Body of pancreas (tissue), 4 donors: ENCODE measurements at regions of chr15 and their contacts with region 1.

Region 1: GRCh38 chr15:72616491-72617210 is 37.8 kb upstream of the GOLGA6B start:
- DNase-seq: no peak
- ATAC-seq: no peak
- H3K4me3 ChIP-seq: no peak overlapping the region
- H3K27ac ChIP-seq: no peak overlapping the region
- H3K4me1 ChIP-seq: no peaks in the 10 kb centered on the region
- H3K27me3 ChIP-seq: no peaks in the 10 kb centered on the region
- CTCF ChIP-seq: no peak
- POLR2A ChIP-seq: no peak

Region 2: GRCh38 chr15:72690938-72691337 is 74.3 kb after region 1 on chr15:
- intact Hi-C with region 1: loop called (anchors 10 kb)
- DNase-seq: no peak
- ATAC-seq: no peak
- H3K4me3 ChIP-seq: no peak overlapping the region
- H3K27ac ChIP-seq: no peak overlapping the region
- H3K4me1 ChIP-seq: peaks cover 7% of the 10 kb centered on the region
- H3K27me3 ChIP-seq: no peaks in the 10 kb centered on the region
- CTCF ChIP-seq: no peak
- POLR2A ChIP-seq: no peak

Region 3: GRCh38 chr15:72890043-72890442 is 273.4 kb after region 1 on chr15:
- intact Hi-C with region 1: no loop called
- DNase-seq: no peak
- ATAC-seq: no peak
- H3K4me3 ChIP-seq: no peak overlapping the region
- H3K27ac ChIP-seq: no peak overlapping the region
- H3K4me1 ChIP-seq: no peaks in the 10 kb centered on the region
- H3K27me3 ChIP-seq: no peaks in the 10 kb centered on the region
- CTCF ChIP-seq: no peak
- POLR2A ChIP-seq: no peak